B cell (primary cell): ENCODE measurements at regions of chr17 and their contacts with region 1.

Region 1: GRCh38 chr17:82297714-82298537 is 19.5 kb downstream of the CD7 start:
- DNase-seq: peak; percentile 97
- ATAC-seq: peak; percentile 74
- H3K4me3 ChIP-seq: peak overlapping the region; percentile 71 to 99 (median 87)
- H3K4me3 Mint-ChIP-seq: peak overlapping the region; percentile 99
- H3K27ac ChIP-seq: peak overlapping the region; percentile 99 to 100
- H3K27ac Mint-ChIP-seq: peak overlapping the region; percentile 100
- H3K4me1 ChIP-seq: peaks cover 45 to 69% of the 10 kb centered on the region in 2 donors
- H3K4me1 Mint-ChIP-seq: peaks cover 73% of the 10 kb centered on the region
- H3K27me3 ChIP-seq: no peaks in the 10 kb centered on the region
- H3K27me3 Mint-ChIP-seq: no peaks in the 10 kb centered on the region
- CTCF ChIP-seq: no peak

Region 2: GRCh38 chr17:82205719-82206508 is 92.0 kb before region 1 on chr17:
- CTCF ChIA-PET with region 1: interaction called, 23 read pairs
- POLR2A ChIA-PET with region 1: interaction called, 10 read pairs
- intact Hi-C with region 1: no loop called
- DNase-seq: peak; percentile 89
- ATAC-seq: peak; percentile 98
- H3K4me3 ChIP-seq: peak overlapping the region in 3 of 5 experiments; percentile 3 to 34 (median 21)
- H3K4me3 Mint-ChIP-seq: peak overlapping the region; percentile 54
- H3K27ac ChIP-seq: peak overlapping the region; percentile 73
- H3K27ac Mint-ChIP-seq: peak overlapping the region; percentile 90
- H3K4me1 ChIP-seq: peaks cover 10 to 11% of the 10 kb centered on the region in 2 donors
- H3K4me1 Mint-ChIP-seq: peaks cover 19% of the 10 kb centered on the region
- H3K27me3 ChIP-seq: no peaks in the 10 kb centered on the region
- H3K27me3 Mint-ChIP-seq: no peaks in the 10 kb centered on the region
- CTCF ChIP-seq: peak; percentile 93

Region 3: GRCh38 chr17:82230627-82231311 is 67.2 kb before region 1 on chr17:
- CTCF ChIA-PET with region 1: interaction called, 6 read pairs
- POLR2A ChIA-PET with region 1: interaction called, 18 read pairs
- intact Hi-C with region 1: no loop called
- DNase-seq: peak; percentile 69
- ATAC-seq: peak; percentile 52
- H3K4me3 ChIP-seq: peak overlapping the region; percentile 31 to 69 (median 59)
- H3K4me3 Mint-ChIP-seq: peak overlapping the region; percentile 85
- H3K27ac ChIP-seq: peak overlapping the region; percentile 42 to 47
- H3K27ac Mint-ChIP-seq: peak overlapping the region; percentile 73
- H3K4me1 ChIP-seq: peaks cover 29 to 63% of the 10 kb centered on the region in 2 donors
- H3K4me1 Mint-ChIP-seq: peaks cover 31% of the 10 kb centered on the region
- H3K27me3 ChIP-seq: no peaks in the 10 kb centered on the region
- H3K27me3 Mint-ChIP-seq: no peaks in the 10 kb centered on the region
- CTCF ChIP-seq: peak; percentile 67

Region 4: DNA sequence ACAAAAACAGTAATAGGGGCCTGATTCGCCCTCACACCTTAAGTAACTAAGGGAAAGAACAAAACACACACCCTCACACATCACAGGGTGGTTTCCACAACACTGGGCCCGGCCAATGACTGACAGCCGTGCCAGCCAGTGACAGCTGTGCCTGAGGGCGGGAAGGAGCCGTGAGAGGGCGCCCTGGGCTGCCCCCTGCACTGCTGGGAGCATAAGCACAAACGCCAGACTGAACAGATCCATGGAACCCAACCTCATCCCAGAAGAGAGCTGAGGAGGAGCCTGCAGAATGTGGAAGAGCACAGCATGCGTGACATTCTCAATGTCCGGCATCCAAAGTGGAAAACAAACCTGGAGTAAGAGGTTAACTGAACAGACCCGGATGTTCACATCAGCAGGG is 40.5 kb before region 1 on chr17:
- CTCF ChIA-PET with region 1: no interaction called
- POLR2A ChIA-PET with region 1: interaction called, 10 read pairs
- intact Hi-C with region 1: no loop called
- DNase-seq: peak; percentile 51
- ATAC-seq: peak; percentile 66
- H3K4me3 ChIP-seq: no peak overlapping the region
- H3K4me3 Mint-ChIP-seq: no peak overlapping the region
- H3K27ac ChIP-seq: peak overlapping the region; percentile 2 to 36
- H3K27ac Mint-ChIP-seq: peak overlapping the region; percentile 37
- H3K4me1 ChIP-seq: no peaks in the 10 kb centered on the region
- H3K4me1 Mint-ChIP-seq: peaks cover 2% of the 10 kb centered on the region
- H3K27me3 ChIP-seq: no peaks in the 10 kb centered on the region
- H3K27me3 Mint-ChIP-seq: no peaks in the 10 kb centered on the region
- CTCF ChIP-seq: no peak

Region 5: DNA sequence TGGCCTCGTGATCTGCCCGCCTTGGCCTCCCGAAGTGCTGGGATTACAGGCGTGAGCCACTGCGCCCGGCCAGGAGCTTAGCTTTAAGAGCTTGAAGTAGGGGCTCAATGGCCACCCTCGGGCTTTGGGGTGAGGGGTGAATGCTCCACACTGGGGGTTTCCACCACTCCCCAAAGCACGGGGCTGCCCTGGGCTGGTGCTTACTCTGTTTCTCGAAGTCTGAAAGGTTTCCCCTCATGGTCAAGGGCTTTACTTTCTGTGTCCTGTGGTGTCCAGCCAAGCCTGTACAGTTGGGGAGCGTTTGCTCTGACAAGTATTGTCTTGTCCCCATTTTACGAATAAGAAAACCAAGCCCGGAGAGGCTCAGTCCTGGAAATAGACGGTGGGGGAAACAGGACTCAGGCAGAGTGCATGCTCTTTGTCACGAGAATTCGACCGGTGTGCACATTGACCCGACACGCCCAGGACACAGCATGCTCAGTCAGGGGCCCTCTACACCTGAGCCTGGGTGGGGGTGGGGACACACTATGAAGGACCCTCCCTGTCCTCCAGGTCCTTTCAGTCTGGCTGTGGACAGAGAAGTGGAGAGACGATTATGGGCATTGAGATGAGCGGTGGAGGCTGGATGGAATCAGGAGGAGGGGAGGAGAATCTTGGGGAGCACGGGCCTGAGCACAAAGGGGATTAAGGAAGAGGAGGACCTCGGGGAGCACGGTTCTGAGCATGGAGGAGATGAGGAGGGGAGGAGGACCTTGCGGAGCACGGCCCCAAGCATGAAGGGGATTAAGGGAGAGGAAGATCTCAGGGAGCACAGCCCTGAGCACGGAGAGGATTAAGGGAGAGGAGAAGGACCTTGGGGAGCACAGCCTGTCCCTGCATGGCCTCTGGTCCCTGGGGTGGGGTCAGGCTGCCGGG is 12.0 kb after region 1 on chr17:
- CTCF ChIA-PET with region 1: interaction called, 23 read pairs
- POLR2A ChIA-PET with region 1: interaction called, 4 read pairs
- intact Hi-C with region 1: no loop called
- DNase-seq: no peak
- ATAC-seq: no peak
- H3K4me3 ChIP-seq: no peak overlapping the region
- H3K4me3 Mint-ChIP-seq: no peak overlapping the region
- H3K27ac ChIP-seq: no peak overlapping the region
- H3K27ac Mint-ChIP-seq: no peak overlapping the region
- H3K4me1 ChIP-seq: peaks cover 5 to 13% of the 10 kb centered on the region in 2 donors
- H3K4me1 Mint-ChIP-seq: peaks cover 7% of the 10 kb centered on the region
- H3K27me3 ChIP-seq: peaks cover 0 to 21% (median 2%) of the 10 kb centered on the region in 4 experiments
- H3K27me3 Mint-ChIP-seq: peaks cover 21% of the 10 kb centered on the region
- CTCF ChIP-seq: no peak

Region 6: DNA sequence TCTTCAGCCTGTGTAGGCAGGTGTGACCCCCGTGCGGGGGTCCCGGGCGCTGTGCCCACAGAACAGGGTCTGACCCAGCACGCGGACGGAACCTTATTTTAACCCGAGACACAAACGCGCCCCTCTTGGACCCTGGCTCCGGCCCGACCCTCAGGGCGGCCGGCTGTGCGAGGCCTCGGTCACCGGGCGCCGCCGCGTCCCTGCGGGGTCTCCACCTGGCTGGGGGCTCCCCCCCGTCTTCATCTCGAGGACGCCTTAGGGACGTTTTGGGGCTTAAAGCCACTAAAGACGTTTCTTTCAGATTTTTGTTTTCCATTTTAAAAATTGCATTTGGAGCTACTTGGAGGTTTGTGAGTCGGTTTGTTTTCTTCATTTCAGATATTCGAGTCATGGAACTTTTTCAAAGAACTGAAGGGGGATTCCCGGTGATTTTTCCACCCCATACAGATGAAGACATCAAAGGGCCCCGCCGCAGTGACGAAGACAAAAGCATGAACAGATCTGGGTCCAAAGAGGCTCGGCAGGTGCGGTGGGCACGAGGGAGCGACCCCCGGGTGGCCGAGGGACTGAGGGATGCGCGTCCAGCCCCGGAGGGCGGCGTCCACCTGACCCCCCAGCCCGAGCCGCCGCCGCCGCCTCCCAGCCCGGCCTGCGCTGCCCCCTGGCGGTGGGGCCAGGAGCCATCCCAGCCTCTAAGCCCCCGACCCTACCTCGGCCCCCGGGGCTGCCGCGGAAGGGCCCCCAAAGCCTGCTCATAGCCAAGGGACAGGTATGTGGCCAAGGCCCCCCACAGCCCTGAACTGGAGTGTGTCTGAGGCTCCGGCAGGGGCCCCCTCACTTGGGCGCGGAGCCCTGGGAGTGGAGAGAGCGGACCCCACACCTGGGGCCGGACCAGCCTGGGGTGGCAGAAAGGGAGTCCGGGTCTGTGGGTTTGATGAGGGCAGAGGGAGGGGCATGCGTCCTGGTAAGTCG is 23.3 kb after region 1 on chr17:
- CTCF ChIA-PET with region 1: interaction called, 68 read pairs
- POLR2A ChIA-PET with region 1: interaction called, 6 read pairs
- intact Hi-C with region 1: loop called (anchors 1 kb)
- DNase-seq: peak; percentile 81
- ATAC-seq: peak; percentile 83
- H3K4me3 ChIP-seq: peak overlapping the region in 3 of 5 experiments; percentile 21 to 31 (median 25)
- H3K4me3 Mint-ChIP-seq: peak overlapping the region; percentile 73
- H3K27ac ChIP-seq: no peak overlapping the region
- H3K27ac Mint-ChIP-seq: peak overlapping the region; percentile 42
- H3K4me1 ChIP-seq: peaks cover 9 to 12% of the 10 kb centered on the region in 2 donors
- H3K4me1 Mint-ChIP-seq: peaks cover 3% of the 10 kb centered on the region
- H3K27me3 ChIP-seq: peaks cover 0 to 13% (median 3%) of the 10 kb centered on the region in 4 experiments
- H3K27me3 Mint-ChIP-seq: no peaks in the 10 kb centered on the region
- CTCF ChIP-seq: peak; percentile 98